Breast epithelium (tissue), 4 donors: ENCODE measurements at regions of chrX and their contacts with region 1.

Region 1: DNA sequence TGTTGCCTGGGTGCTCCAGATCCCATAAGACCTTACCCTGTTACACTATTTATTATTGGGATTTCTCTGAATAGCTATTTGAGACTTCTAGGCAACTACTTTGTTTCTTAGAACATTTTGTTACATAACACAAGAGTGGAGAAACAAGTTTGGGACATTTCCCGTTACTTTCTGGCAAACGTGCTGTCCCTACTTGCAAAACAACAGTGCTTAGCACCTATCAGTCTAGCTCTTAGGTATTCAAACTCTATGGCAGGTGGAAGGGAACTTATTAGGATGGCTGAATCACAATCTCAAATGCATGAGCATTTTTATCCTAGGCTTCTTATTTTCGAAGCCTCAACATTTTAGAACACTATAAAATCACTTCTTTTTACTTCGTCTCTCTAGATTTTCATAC is 613.6 kb downstream of the DMD start:
- DNase-seq: no peak
- H3K4me3 ChIP-seq: no peak overlapping the region
- H3K27ac ChIP-seq: peak overlapping the region in 1 of 2 donors; percentile 32
- H3K4me1 ChIP-seq: no peaks in the 10 kb centered on the region
- H3K27me3 ChIP-seq: peaks cover 0 to 6% of the 10 kb centered on the region in 2 donors
- CTCF ChIP-seq: no peak
- POLR2A ChIP-seq: no peak

Region 2: DNA sequence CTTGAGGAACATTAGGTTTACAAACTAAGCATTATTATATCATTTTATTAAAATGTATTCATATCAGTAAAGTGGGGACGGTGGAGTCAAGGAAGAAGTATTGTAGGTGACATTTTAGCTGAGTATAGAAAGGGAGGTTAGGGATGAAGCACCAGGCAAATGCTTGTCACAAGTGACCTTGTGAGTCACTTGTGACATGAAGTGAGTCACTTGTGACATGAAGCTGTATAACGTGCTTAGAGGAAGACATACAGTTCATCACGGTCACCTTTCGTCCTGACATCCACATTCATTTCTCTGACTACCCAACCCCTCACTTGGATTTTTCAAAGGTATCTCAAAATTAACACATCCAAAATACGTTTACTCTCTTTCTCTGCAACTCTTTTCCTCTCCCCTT is 421.3 kb before region 1 on chrX:
- intact Hi-C with region 1: loop called (anchors 5 kb)
- DNase-seq: no peak
- H3K4me3 ChIP-seq: no peak overlapping the region
- H3K27ac ChIP-seq: no peak overlapping the region
- H3K4me1 ChIP-seq: no peaks in the 10 kb centered on the region
- H3K27me3 ChIP-seq: peaks cover 0 to 3% of the 10 kb centered on the region in 2 donors
- CTCF ChIP-seq: no peak
- POLR2A ChIP-seq: no peak

Region 3: DNA sequence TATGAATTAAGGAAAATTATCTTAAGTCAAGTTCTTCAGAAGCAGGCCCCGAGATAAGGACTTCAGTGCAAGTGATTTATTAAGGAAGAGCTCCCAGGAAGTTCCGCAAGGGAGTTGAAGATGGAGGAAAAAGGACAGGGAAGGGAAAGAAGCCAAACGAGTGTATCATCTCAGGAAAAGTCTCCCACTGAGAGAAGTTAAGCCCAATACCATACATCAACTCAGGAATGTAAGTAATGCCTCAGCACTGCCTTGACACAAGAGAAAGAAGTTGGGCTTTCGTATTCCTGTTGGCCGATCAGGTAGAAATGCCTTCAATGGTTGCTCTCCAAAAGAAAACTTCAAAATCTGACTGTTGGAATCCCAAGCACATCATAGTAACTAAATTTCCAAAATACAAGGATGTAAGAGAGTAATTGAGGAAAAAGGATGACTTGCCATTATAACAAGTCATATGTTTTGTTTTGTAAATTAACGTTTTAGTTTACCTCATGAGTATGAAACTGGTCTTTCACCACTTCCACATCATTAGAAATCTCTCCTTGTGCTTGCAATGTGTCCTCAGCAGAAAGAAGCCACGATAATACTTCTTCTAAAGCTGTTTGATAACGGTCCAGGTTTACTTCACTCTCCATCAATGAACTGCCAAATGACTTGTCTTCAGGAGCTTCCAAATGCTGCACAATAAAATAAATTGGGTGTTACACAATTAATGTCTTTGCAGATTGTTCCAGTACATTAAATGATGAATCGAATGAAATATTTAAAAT is 46.9 kb after region 1 on chrX:
- intact Hi-C with region 1: no loop called
- DNase-seq: no peak
- H3K4me3 ChIP-seq: no peak overlapping the region
- H3K27ac ChIP-seq: no peak overlapping the region
- H3K4me1 ChIP-seq: no peaks in the 10 kb centered on the region
- H3K27me3 ChIP-seq: peaks cover 0 to 10% of the 10 kb centered on the region in 2 donors
- CTCF ChIP-seq: no peak
- POLR2A ChIP-seq: no peak